Activated B cell treated with CpG ODN at 0.5 μM for 24 hours (primary cell): ENCODE measurements at regions of chr6 and their contacts with region 1.

Region 1: DNA sequence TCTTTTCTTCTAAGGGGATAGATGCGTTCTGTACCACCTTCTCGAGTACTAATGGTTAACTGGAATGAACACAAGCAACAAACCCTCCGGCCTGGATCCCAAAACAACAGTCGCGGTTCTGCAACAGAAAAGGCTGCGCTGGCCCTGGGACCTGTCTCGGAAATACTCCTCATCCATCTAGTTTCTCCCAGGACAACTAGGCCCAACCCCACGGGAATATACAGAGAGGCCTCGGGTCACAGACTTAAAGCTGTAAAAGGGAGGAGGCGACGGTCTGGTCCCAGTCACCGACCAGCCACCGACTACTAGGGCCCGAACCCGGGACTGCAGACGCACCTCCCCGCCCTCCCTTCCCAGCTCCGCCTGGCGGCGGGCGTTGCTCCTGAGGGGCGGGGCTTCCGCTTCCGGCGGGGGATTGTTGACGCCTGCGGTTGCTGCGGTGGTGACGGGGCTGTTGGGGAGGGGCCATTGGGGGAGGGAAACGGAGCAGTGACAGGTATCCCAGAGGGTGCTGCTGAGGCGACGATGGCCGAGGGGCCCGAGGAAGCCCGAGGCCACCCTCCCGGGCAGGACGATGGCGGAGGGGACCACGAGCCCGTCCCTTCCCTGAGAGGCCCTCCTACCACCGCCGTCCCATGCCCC is at the start of gene FAM8A1:
- DNase-seq: peak; percentile 88
- ATAC-seq: peak; percentile 91
- H3K4me3 Mint-ChIP-seq: peak within 1 kb of the TSS; percentile 80
- H3K27ac Mint-ChIP-seq: peak within 1 kb of the TSS; percentile 78
- H3K4me1 Mint-ChIP-seq: peaks cover 11% of the 10 kb centered on the region
- H3K27me3 Mint-ChIP-seq: no peaks in the 10 kb centered on the region
- CTCF ChIP-seq: no peak
- total RNA-seq, gene FAM8A1: 2.6 and 3.0 TPM in 2 replicates

Region 2: DNA sequence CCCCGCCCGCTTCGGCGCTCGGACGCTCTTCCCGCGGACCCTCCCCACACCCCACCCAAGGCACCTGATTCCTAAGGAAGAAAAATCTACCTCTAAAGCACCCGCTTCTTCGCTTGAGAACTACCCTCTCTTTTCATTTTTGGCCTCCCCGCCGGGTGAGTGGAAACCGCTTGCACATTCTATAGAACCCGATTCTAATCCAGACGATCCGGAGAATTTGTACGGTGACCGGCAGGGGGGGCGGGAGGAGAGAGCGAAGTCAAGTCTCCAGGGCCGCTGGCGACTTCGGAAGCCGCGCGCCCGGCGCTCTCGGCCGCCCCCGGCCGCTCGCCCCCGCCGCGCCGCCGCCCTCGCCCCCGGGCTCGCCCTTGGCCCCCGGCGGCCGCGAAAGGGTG is 318.9 kb before region 1 on chr6 and contains the start of gene RBM24:
- CTCF ChIA-PET with region 1: no interaction called
- POLR2A ChIA-PET with region 1: no interaction called
- intact Hi-C with region 1: no loop called
- DNase-seq: no peak
- ATAC-seq: no peak
- H3K4me3 Mint-ChIP-seq: peak within 1 kb of the TSS; percentile 72
- H3K27ac Mint-ChIP-seq: no peak within 1 kb of the TSS
- H3K4me1 Mint-ChIP-seq: peaks cover 11% of the 10 kb centered on the region
- H3K27me3 Mint-ChIP-seq: peaks cover 48% of the 10 kb centered on the region
- CTCF ChIP-seq: no peak
- total RNA-seq, gene RBM24: not detected in 2 replicates

Region 3: DNA sequence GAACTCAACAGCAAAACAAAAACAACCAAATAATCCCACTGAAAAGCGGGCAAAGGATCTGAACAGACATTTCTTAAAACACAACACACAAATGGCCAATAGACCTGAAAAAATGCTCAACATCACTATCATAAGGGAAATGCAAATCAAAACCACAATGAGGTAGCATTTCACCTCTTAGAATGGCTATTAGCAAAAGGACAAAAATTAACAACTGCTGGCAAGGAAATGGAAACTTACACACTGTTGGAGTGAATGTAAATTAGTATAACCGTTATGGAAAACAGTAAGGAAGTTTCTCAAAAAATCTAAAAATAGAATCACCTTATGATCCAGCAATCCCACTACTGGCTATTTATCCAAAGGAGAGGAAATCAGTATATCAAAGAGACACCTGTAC is 21.0 kb after region 1 on chr6:
- CTCF ChIA-PET with region 1: no interaction called
- POLR2A ChIA-PET with region 1: interaction called, 9 read pairs
- intact Hi-C with region 1: loop called (anchors 1 kb)
- DNase-seq: no peak
- ATAC-seq: peak; percentile 31
- H3K4me3 Mint-ChIP-seq: no peak overlapping the region
- H3K27ac Mint-ChIP-seq: peak overlapping the region; percentile 9
- H3K4me1 Mint-ChIP-seq: peaks cover 16% of the 10 kb centered on the region
- H3K27me3 Mint-ChIP-seq: no peaks in the 10 kb centered on the region
- CTCF ChIP-seq: no peak

Region 4: GRCh38 chr6:17803409-17803808 is 203.4 kb after region 1 on chr6:
- CTCF ChIA-PET with region 1: interaction called, 3 read pairs
- POLR2A ChIA-PET with region 1: no interaction called
- intact Hi-C with region 1: loop called (anchors 5 kb)
- DNase-seq: no peak
- ATAC-seq: no peak
- H3K4me3 Mint-ChIP-seq: no peak overlapping the region
- H3K27ac Mint-ChIP-seq: no peak overlapping the region
- H3K4me1 Mint-ChIP-seq: no peaks in the 10 kb centered on the region
- H3K27me3 Mint-ChIP-seq: no peaks in the 10 kb centered on the region
- CTCF ChIP-seq: no peak

Region 5: DNA sequence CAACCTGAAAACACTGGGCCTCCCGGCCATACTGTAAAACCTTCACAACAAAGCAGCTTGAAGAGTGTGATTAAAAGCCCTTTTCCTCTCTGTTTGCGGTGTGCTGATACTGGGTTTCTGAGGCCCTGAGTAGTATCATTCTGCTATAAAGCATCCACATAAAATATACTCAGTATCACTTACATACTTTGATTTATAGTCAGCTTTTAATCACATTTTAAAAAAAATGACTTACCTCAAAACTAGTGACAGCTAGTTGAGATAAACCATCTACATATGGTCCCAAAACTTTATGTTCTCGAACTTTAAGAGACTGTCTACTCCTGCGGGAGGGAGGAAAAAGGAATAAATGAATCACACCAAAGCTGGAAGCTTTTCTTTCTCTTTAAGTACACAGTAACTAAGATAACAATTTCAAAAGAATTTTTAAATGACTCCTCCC is 251.7 kb after region 1 on chr6:
- CTCF ChIA-PET with region 1: no interaction called
- POLR2A ChIA-PET with region 1: interaction called, 12 read pairs
- intact Hi-C with region 1: no loop called
- DNase-seq: no peak
- ATAC-seq: no peak
- H3K4me3 Mint-ChIP-seq: no peak overlapping the region
- H3K27ac Mint-ChIP-seq: no peak overlapping the region
- H3K4me1 Mint-ChIP-seq: no peaks in the 10 kb centered on the region
- H3K27me3 Mint-ChIP-seq: no peaks in the 10 kb centered on the region
- CTCF ChIP-seq: no peak